ENCODE measurements at regions of chr18 and their contacts with region 1.

Region 1: DNA sequence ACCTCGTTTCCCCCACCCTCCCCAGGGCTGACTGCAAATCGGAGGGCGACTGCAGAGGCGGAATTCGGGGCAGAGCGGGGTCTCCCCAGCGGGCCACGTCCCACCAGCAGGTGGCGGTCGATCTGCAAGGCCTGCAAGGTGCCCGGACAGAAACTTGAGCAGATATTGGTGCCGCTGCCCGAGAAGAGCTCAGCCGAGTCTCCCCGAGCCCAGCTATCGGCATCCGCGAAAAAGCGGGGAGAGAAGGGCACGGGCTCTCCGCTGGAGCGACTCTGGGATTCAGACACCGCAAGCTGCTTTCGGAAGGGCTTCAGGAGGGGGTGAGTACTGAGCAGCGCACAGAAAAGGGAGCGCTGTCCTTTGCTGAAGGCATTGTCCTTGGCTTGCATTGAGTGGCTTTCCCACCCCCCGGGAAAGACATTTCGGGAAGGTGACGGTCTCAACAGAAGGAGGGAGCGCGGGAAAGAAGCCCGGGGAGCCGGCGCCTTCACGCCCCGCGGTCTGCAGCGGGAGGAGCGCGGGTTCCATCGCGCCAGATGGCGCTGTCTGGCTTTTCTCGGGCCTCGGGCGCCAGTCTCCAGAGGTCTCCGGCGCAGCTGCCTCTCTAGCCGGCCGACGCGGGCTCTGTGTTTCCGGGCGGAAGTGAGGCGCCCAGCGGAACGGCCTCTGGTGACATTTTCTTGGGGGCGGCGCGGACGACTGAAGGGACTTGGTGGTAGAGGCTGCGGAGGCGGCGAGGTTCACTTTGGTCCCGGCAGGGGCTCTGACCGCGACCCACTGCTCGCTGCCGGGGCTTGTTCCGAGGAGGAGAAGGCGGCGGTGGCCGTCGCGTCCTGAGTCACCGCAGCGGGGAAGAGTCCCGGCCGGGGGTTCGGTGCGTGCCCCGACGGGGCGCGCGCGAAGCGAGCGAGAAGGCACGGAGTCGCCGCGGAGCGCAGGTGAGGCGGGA is 69.5 kb downstream of the HAUS1 start:
- DNase-seq: peak; percentile 95
- H3K4me3 Mint-ChIP-seq: peak overlapping the region; percentile 99
- H3K27ac Mint-ChIP-seq: peak overlapping the region; percentile 97
- H3K4me1 Mint-ChIP-seq: peaks cover 44% of the 10 kb centered on the region
- H3K27me3 Mint-ChIP-seq: no peaks in the 10 kb centered on the region

Region 2: DNA sequence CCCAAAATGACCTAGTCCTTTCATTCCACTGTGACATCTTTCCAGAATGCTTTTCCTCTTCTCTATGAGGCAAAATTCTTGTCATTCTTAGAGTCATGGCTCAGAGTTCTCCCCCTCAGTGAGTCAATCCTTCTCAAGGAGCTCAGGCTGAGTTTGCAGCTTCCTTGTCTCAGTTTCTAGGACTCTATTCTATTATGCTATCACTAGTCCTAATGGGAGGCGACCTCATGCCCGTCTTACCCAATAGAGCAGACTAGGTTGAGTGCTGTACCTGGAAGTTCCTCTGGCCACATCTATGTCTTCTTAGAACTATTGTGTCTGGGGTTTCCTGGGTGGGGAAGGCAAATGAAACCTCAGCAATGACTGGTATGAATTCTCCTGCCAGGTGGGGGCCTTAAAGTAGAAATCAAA is 18.0 kb before region 1 on chr18:
- CTCF ChIA-PET with region 1: interaction called, 72 read pairs
- intact Hi-C with region 1: loop called (anchors 1 kb)
- DNase-seq: peak; percentile 66
- H3K4me3 Mint-ChIP-seq: no peak overlapping the region
- H3K27ac Mint-ChIP-seq: peak overlapping the region; percentile 89
- H3K4me1 Mint-ChIP-seq: peaks cover 63% of the 10 kb centered on the region
- H3K27me3 Mint-ChIP-seq: no peaks in the 10 kb centered on the region

Region 3: GRCh38 chr18:46220116-46220515 is 46.4 kb after region 1 on chr18:
- CTCF ChIA-PET with region 1: interaction called, 14 read pairs
- intact Hi-C with region 1: no loop called
- DNase-seq: no peak
- H3K4me3 Mint-ChIP-seq: no peak overlapping the region
- H3K27ac Mint-ChIP-seq: no peak overlapping the region
- H3K4me1 Mint-ChIP-seq: peaks cover 79% of the 10 kb centered on the region
- H3K27me3 Mint-ChIP-seq: no peaks in the 10 kb centered on the region

Region 4: GRCh38 chr18:46281185-46282176 is 107.8 kb after region 1 on chr18:
- CTCF ChIA-PET with region 1: interaction called, 53 read pairs
- intact Hi-C with region 1: loop called (anchors 1 kb)
- DNase-seq: peak; percentile 78
- H3K4me3 Mint-ChIP-seq: no peak overlapping the region
- H3K27ac Mint-ChIP-seq: no peak overlapping the region
- H3K4me1 Mint-ChIP-seq: peaks cover 5% of the 10 kb centered on the region
- H3K27me3 Mint-ChIP-seq: no peaks in the 10 kb centered on the region

Region 5: GRCh38 chr18:46481048-46481846 is 307.6 kb after region 1 on chr18:
- CTCF ChIA-PET with region 1: interaction called, 16 read pairs
- intact Hi-C with region 1: loop called (anchors 1 kb)
- DNase-seq: peak; percentile 68
- H3K4me3 Mint-ChIP-seq: no peak overlapping the region
- H3K27ac Mint-ChIP-seq: no peak overlapping the region
- H3K4me1 Mint-ChIP-seq: no peaks in the 10 kb centered on the region
- H3K27me3 Mint-ChIP-seq: no peaks in the 10 kb centered on the region

Region 6: DNA sequence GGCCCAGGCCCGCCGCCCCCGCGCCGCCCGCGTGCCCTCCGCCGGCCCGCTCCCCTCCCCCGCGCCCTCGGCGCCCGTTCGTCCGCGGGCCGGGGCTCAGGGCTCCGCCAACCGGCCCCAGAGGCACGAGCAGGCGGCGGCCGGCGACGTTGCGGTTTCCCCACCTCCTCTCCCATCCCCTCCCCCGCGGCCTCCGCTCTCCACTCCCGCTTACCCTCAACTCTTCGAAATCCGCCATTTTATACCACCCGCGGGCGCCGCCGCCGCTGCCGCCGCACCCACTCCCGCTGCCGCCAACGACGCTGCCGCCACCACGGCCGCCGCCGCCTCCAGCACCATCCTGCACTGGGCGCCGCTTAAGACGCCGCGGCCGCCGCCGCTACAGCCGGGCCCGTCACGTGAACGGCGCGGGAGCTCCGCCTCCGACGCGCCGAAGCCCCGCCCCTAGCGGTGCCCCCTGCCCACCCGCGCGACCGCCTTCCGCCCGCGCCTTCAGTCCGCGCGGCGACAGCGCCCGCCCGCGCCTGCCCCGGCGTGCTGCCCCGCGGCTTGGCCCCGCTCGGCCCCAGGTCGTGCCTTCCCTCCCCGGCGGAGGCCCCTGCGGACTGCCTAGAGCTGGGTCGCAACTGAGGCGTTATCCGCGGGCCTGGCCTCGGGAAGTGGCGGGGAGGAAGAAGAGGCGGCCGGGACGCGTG is 743.6 kb after region 1 on chr18 and contains the starts of genes KATNAL2 and PIAS2:
- CTCF ChIA-PET with region 1: no interaction called
- intact Hi-C with region 1: loop called (anchors 2 kb)
- DNase-seq: peak; percentile 71
- H3K4me3 Mint-ChIP-seq: peak within 1 kb of the TSS; percentile 86
- H3K27ac Mint-ChIP-seq: peak within 1 kb of the TSS; percentile 86
- H3K4me1 Mint-ChIP-seq: peaks cover 48% of the 10 kb centered on the region
- H3K27me3 Mint-ChIP-seq: no peaks in the 10 kb centered on the region
- total RNA-seq, gene KATNAL2: 0.45 to 0.52 TPM
- total RNA-seq, gene PIAS2: 21.9 to 23.4 TPM

Measured in activated naive CD4-positive, alpha-beta T cell treated with anti-CD3 and anti-CD28 coated beads for 36 hours (primary cell).